Panc1 (cell line): ENCODE measurements at regions of chr17 and their contacts with region 1.

Region 1: DNA sequence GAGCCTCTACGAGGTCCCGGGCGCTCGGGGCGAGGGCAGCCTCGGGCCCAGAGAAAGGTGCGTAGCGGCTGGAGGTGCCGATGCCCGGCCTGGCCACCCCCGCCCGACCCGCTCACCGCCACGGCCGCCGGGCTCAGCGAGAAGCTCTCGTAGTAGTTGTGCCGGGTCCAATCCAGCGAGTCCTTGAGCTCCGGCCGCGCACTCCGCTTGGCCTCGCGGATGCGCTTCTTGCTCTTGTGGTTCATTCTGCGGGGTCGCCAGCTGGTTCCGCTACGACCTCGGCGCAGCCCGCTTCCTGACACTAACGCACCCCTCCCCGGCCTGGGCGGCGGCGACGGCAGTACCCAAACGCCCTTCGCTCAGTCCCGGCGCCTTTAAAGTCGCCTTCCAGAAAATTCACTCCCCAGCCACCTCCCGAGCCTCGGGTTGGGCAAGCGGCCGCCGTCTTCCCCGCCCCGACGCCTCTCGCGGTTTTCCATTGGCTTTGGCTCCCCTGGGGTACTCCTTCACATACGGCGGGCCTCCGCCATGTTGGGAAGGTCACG is at the start of gene JMJD6:
- DNase-seq: peak; percentile 69
- ATAC-seq: peak; percentile 95
- H3K4me3 ChIP-seq: peak within 1 kb of the TSS; percentile 79 to 92
- H3K27ac ChIP-seq: peak within 1 kb of the TSS; percentile 91
- H3K4me1 ChIP-seq: peaks cover 4% of the 10 kb centered on the region; the same call in 1 of the 2 replicates
- H3K27me3 ChIP-seq: no peaks in the 10 kb centered on the region
- CTCF ChIP-seq: no peak
- total RNA-seq, gene JMJD6: 60.0 TPM

Region 2: GRCh38 chr17:76737082-76737675 is 10.9 kb after region 1 on chr17 and contains the start of gene SRSF2:
- CTCF ChIA-PET with region 1: no interaction called
- POLR2A ChIA-PET with region 1: interaction called, 10 read pairs
- in situ Hi-C with region 1: no loop called
- intact Hi-C with region 1: no loop called
- DNase-seq: peak; percentile 76
- ATAC-seq: peak; percentile 87
- H3K4me3 ChIP-seq: peak within 1 kb of the TSS; percentile 96 to 97
- H3K27ac ChIP-seq: peak within 1 kb of the TSS; percentile 98
- H3K4me1 ChIP-seq: peaks cover 42% of the 10 kb centered on the region
- H3K27me3 ChIP-seq: no peaks in the 10 kb centered on the region
- CTCF ChIP-seq: no peak
- total RNA-seq, gene SRSF2: 436 TPM